ENCODE measurements at regions of chr17 and their contacts with region 1.

Region 1: DNA sequence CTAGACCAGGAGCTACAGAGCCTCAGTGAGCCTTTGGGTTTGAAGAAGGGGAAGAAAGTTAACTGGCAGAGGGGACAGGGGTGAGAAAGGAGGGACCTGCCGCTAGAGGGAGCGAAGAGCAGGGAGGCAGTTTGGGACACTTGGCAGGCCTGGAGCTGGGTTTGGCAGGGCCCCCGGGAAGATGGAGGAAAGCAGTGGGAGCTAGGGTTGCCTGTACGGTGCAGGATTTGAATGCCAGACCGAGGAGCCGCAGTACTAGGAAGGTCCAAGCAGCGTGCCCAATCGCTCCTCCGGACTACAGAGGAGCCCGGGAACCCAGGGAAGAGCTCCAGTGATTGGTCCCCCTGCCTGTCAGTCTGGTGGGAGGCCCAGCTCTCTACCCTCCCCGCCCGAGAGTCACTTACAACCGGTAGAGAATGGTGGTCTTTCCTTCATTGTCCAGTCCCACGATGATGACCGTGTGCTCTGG is 1.3 kb downstream of the ARL5C start:
- DNase-seq: peak; percentile 51
- H3K4me3 ChIP-seq: peak overlapping the region; percentile 32
- H3K27me3 ChIP-seq: peaks cover 23% of the 10 kb centered on the region
- CTCF ChIP-seq: peak; percentile 94

Region 2: DNA sequence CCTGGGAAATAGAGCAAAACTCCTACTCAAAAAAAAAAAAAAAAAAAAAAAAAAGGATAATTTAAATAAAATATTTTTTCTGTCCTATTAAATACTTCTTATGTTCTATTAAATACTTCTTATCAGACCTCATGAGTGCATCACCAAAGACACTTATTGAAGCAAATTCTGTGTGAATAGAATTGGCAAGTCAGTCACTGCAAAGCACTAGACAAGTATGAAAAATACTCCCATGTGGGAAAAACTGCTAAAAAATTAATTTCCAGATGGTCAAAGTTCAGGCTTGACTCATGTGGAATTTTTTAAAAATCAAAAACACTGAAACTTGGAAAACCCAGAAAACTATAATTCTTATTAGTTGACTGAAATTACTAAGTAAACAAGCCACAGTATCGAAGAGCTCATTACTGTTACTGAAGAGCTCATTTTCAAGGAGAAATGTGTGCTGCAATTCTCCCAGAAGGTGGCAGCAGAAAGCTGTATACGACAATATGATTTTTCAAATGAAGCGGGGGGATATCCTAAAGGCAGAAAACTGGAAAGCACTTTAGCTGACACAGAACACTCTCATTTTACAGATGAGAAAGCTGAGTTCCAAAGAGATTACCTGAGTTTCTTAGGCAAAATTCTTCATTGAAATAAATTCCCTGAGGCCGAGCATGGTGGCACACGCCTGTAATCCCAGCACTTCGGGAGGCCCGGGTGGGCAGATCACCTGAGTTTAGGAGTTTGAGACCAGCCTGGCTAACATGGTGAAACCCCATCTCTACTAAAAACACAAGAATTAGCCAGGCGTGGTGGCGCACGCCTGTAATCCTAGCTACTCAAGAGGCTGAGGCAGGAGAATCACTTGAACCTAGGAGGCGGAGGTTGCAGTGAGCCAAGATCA is 181.6 kb before region 1 on chr17:
- CTCF ChIA-PET with region 1: interaction called, 14 read pairs
- POLR2A ChIA-PET with region 1: no interaction called
- DNase-seq: no peak
- H3K4me3 ChIP-seq: no peak overlapping the region
- H3K27me3 ChIP-seq: no peaks in the 10 kb centered on the region
- CTCF ChIP-seq: peak; percentile 80

Region 3: GRCh38 chr17:39174907-39175694 is 10.4 kb after region 1 on chr17:
- CTCF ChIA-PET with region 1: interaction called, 73 read pairs
- POLR2A ChIA-PET with region 1: no interaction called
- DNase-seq: no peak
- H3K4me3 ChIP-seq: no peak overlapping the region
- H3K27me3 ChIP-seq: no peaks in the 10 kb centered on the region
- CTCF ChIP-seq: peak; percentile 87

Region 4: GRCh38 chr17:39199820-39200069 is 35.0 kb after region 1 on chr17:
- CTCF ChIA-PET with region 1: interaction called, 16 read pairs
- POLR2A ChIA-PET with region 1: no interaction called
- DNase-seq: peak; percentile 57
- H3K4me3 ChIP-seq: peak overlapping the region; percentile 64
- H3K27me3 ChIP-seq: no peaks in the 10 kb centered on the region
- CTCF ChIP-seq: no peak

Region 5: DNA sequence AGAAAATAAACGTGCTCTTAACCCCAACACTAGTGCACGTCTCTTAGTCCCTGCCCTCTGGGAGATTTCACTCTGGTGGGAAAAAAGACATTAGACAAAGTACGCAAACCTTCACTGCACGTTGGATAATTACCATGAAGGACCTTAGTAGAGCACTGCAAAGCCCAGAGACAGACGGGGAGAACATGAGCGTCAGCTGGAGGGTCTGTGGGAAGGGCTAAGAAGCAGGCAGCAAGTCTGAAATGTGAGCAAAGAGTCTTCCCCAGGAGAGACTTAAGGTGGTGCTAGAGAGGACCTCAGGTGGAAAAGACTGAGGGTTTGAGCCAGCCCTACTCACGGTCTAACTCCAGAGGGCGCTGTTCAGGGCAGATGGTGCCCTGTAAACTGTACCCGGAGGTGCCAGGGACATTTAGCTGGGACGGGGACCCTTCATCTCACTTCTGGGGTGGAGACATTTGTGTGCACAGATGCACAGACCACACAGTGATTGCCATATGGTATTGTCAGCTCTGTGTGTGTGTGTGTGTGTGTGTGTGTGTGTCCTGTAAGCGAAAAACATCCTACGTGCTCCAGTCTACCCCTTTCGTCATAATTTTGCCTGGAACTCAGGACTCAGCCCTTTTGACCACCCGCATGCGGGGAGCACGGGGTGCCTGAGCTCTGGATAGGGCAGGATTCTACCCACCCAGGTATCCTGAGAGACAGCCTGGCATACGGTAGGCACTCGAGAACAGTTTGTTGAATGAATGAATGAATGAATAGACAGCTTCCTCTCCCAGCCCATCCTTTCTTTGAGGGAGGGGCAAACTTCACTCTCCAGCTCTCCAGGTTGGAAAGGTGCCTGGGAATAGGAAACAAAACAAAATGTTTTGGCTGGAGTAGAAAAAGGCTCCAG is 71.1 kb after region 1 on chr17:
- CTCF ChIA-PET with region 1: interaction called, 23 read pairs
- POLR2A ChIA-PET with region 1: no interaction called
- DNase-seq: no peak
- H3K4me3 ChIP-seq: no peak overlapping the region
- H3K27me3 ChIP-seq: peaks cover 2% of the 10 kb centered on the region; the same call in 1 of the 2 replicates
- CTCF ChIP-seq: peak; percentile 71